B cell (primary cell): ENCODE measurements at regions of chr1 and their contacts with region 1.

Region 1: GRCh38 chr1:89804642-89805237 is 16.1 kb upstream of the LRRC8D start:
- DNase-seq: peak; percentile 87
- ATAC-seq: peak; percentile 93
- H3K4me3 ChIP-seq: no peak overlapping the region
- H3K4me3 Mint-ChIP-seq: no peak overlapping the region
- H3K27ac ChIP-seq: no peak overlapping the region
- H3K27ac Mint-ChIP-seq: no peak overlapping the region
- H3K4me1 ChIP-seq: peaks cover 0 to 3% of the 10 kb centered on the region in 2 donors
- H3K4me1 Mint-ChIP-seq: no peaks in the 10 kb centered on the region
- H3K27me3 ChIP-seq: peaks cover 0 to 3% (median 0%) of the 10 kb centered on the region in 4 experiments
- H3K27me3 Mint-ChIP-seq: no peaks in the 10 kb centered on the region
- CTCF ChIP-seq: peak; percentile 90

Region 2: DNA sequence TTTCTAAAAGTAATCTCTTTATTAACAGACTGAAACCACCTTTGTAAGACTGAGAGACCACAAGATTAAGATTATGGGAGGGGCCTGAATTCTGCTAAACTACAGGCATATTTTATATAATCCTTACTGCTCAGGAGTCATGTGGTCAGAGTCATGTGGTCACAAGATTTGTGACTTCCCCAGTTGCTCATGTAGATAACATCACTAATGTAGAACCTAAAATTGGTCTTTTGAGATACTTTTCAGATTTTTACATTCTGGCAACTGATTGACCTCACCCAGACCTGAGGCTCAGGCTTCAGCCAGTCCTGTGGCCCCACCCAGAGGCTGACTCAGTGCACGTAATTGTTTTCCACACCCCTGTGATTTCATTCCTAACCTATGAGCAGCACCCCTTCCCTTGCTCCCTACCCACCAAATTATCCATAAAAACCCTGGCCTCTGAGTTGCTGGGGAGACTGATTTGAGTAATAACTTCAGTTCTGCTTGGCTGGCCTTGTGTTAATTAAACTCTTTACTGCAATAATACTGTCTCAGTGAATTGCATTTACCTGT is 148.4 kb after region 1 on chr1:
- CTCF ChIA-PET with region 1: interaction called, 5 read pairs
- POLR2A ChIA-PET with region 1: no interaction called
- intact Hi-C with region 1: loop called (anchors 1 kb)
- DNase-seq: peak; percentile 12
- ATAC-seq: peak; percentile 21
- H3K4me3 ChIP-seq: no peak overlapping the region
- H3K4me3 Mint-ChIP-seq: no peak overlapping the region
- H3K27ac ChIP-seq: no peak overlapping the region
- H3K27ac Mint-ChIP-seq: no peak overlapping the region
- H3K4me1 ChIP-seq: peaks cover 3 to 8% of the 10 kb centered on the region in 2 donors
- H3K4me1 Mint-ChIP-seq: peaks cover 13% of the 10 kb centered on the region
- H3K27me3 ChIP-seq: no peaks in the 10 kb centered on the region
- H3K27me3 Mint-ChIP-seq: no peaks in the 10 kb centered on the region
- CTCF ChIP-seq: no peak